Ascending aorta (tissue), 2 donors: ENCODE measurements at regions of chr3 and their contacts with region 1.

Region 1: DNA sequence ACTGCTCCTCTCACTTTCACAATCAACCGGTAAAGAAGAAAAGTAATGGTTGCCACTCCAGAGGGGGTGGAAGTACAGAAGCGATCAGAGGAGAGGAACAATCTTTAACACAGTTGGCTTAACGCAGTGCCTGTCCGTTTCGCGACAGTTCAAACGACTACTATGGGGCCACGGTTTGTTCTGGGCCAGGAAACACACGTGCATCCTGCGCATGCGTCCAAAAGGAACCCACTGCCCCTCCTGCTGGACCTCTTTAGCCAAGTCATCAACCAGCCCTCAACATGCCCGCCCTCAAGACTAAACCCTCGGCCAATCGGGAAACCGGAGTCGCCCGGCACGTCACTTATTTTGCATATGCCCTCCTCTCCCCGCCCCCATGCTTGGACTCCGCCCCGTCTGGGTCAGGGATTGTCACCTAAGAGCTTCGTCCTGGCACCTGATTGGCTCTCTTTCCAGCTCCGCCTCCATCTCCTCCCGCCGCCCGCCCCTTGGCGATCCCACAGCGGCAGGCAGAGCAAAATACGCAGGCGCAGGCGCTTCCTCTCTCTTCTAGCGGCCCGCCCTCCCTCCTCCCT is 345 bp upstream of the CDV3 start:
- DNase-seq: peak; percentile 100
- H3K4me3 ChIP-seq: peak overlapping the region; percentile 73 to 88
- H3K27ac ChIP-seq: peak overlapping the region; percentile 94 to 97
- H3K4me1 ChIP-seq: peaks cover 26 to 51% of the 10 kb centered on the region in 2 donors
- H3K27me3 ChIP-seq: no peaks in the 10 kb centered on the region
- CTCF ChIP-seq: no peak

Region 2: GRCh38 chr3:132416807-132417694 is 1156.1 kb before region 1 on chr3 and contains the start of gene DNAJC13:
- intact Hi-C with region 1: loop called (anchors 10 kb)
- DNase-seq: peak; percentile 73 to 96
- H3K4me3 ChIP-seq: peak within 1 kb of the TSS; percentile 79 to 98
- H3K27ac ChIP-seq: peak within 1 kb of the TSS; percentile 77 to 87
- H3K4me1 ChIP-seq: peaks cover 0 to 15% of the 10 kb centered on the region in 2 donors
- H3K27me3 ChIP-seq: no peaks in the 10 kb centered on the region
- CTCF ChIP-seq: no peak
- total RNA-seq, gene DNAJC13: 29.4 TPM

Region 3: GRCh38 chr3:132722164-132723024 is 850.7 kb before region 1 on chr3 and contains the start of gene NPHP3:
- intact Hi-C with region 1: loop called (anchors 1 kb)
- DNase-seq: peak; percentile 88 to 98
- H3K4me3 ChIP-seq: peak within 1 kb of the TSS; percentile 85 to 96
- H3K27ac ChIP-seq: peak within 1 kb of the TSS; percentile 93 to 97
- H3K4me1 ChIP-seq: peaks cover 6 to 17% of the 10 kb centered on the region in 2 donors
- H3K27me3 ChIP-seq: no peaks in the 10 kb centered on the region
- CTCF ChIP-seq: no peak
- total RNA-seq, gene NPHP3: 11.9 TPM

Region 4: DNA sequence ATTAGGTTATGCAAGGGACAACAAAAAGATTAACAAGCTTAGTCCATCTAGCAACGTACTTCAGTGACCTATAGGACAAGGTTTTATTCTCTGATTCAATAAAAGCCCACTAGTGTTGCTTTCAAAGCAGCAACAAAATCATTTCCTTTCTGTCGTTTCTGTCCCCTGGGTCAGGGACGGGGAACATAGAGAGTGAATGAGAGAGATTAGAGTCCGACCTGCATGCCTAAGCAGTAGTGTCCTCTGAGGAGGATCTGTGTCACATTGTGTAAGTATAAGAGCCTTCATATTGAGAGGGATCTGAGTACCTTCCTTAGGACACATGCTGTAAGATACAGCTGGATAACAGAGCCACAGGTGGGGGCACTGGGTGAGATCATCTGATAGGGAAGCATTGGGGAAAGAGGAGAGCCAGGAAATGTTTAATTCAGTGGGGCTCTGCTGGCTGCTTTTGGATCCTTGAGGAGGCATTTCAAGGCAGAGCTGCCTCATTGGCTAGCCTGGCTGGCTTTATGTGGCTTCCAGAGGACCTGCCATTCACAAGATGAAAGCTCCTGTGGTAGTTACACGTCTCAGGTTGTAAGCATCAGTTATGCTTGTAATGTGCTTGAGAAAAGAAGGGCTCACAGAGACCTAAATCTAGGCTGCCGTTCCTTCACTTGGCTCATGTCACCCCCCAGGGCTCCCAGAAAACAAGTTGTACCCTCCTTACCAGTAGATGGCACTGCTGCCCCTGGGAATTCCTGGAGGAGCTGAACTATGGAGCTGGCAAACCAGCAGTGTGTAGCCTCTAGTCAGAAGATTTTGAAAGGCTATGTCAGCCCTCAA is 532.2 kb before region 1 on chr3:
- intact Hi-C with region 1: loop called (anchors 5 kb)
- DNase-seq: peak in 1 of 2 donors; percentile 76
- H3K4me3 ChIP-seq: no peak overlapping the region
- H3K27ac ChIP-seq: peak overlapping the region in 1 of 2 donors; percentile 8
- H3K4me1 ChIP-seq: peaks cover 0 to 2% of the 10 kb centered on the region in 2 donors
- H3K27me3 ChIP-seq: no peaks in the 10 kb centered on the region
- CTCF ChIP-seq: peak; percentile 41 to 73 (median 46)

Region 5: DNA sequence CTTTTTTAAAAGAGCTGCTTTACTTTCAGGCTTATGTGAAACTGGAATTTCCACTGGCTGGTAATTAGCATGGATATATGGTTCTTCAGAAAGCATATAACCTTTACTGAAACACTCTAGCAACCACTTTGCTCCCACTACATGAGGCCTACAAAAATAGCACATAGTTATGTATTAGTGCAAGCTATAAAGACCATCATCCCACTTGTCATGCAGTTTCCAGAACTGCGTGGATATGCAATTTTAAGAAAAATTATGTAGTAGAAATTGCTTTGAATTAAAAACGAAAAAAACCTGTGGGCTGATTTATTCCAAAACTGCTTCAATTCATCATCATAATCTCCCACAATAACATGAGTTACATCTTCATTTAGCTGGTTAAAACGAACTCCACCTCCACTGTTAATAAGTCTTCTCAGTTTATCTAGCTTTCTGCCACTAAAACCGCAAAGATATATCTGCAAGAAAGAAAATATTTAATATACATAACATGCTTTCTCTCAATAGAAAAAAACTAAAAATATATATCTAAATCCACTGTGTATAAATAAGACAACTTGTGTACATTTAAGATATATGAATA is 76.4 kb after region 1 on chr3:
- intact Hi-C with region 1: no loop called
- DNase-seq: no peak
- H3K4me3 ChIP-seq: no peak overlapping the region
- H3K27ac ChIP-seq: no peak overlapping the region
- H3K4me1 ChIP-seq: no peaks in the 10 kb centered on the region
- H3K27me3 ChIP-seq: no peaks in the 10 kb centered on the region
- CTCF ChIP-seq: no peak

Region 6: DNA sequence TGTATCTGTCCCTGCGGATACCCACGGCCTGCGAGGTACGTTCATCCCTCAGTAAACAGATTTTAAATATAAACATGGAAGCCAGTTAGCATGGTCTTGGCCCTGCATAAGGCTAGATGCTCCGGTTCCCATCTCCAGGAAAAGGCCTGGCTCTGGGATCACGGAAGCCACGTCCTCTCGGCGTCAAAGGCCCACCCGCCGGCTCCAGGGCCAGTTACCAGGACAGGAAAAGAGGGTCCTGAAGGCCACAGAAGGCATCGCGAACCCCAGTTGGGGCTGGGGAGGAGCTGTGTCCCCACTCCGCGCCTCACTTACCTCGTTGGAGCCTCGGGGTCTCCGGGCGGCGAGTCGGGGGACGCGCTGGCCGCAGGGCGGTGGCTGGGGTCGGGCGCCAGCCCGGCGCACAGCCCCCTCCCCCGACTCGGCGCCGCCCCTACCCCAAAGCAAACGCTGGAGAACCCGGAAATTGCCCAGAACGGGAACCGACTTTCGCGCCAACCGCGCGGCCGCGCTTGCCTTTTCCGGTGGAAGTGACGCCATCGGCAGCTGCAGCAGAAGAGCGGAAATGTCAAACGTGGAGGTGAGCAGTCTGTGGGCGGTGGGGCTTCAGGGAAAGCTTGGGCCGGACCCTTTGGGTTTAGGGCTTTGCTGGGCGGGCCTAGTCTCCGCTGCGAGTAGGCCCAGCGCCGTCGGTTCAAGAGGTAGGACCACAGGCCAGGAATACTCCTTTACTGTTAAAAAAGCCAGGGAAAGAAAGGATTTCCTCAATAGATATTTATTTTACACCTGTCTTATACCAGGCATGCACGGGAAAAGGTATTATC is 88.5 kb after region 1 on chr3 and contains the start of gene TOPBP1:
- intact Hi-C with region 1: loop called (anchors 5 kb)
- DNase-seq: peak in 1 of 2 donors; percentile 85
- H3K4me3 ChIP-seq: peak within 1 kb of the TSS; percentile 77 to 94
- H3K27ac ChIP-seq: peak within 1 kb of the TSS; percentile 85 to 92
- H3K4me1 ChIP-seq: peaks cover 0 to 8% of the 10 kb centered on the region in 2 donors
- H3K27me3 ChIP-seq: no peaks in the 10 kb centered on the region
- CTCF ChIP-seq: no peak
- total RNA-seq, gene TOPBP1: 10.6 TPM

Region 7: DNA sequence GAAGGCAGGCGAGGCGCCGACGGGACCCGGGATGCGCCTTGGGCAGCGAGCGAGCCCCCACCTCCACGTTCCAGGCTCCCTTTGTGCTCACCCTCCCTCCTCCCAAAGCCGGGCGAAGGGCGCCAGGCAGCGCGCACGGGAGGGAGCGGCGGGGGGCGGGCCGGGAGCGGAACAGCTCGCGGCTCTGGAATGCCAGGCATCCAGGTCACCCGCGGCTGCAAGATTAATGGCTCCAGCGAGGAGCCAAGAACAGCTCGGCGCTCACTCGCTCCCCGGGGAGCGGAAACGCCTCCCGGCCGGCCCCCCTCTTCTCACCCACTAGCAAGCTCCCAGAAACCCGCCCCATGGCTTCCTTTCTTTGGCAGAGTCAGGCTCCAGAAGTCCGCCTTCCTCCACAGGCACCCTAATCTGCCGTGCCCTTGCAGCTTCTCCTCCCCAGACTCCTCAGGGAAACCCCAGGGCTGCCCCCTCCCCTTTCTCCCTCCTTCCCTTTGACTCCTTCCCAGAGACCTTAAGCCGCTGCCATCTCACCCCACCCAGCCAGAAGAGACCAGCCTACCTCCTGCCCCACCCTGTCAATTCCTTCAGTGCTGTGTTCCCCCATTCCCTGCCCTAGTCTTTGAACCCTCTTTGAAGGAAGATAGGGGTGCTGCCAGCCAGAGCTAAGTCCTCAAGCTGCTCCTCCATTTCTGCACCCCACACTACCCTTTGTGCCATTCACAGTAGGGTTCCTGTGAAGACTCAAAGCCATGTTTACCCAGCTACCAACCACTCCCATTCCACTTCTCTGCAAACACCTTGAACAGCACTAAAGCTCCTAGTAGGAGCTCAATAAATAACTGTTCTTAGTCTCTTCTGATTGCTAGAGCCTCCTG is 791.2 kb after region 1 on chr3:
- intact Hi-C with region 1: loop called (anchors 10 kb)
- DNase-seq: peak; percentile 75 to 98
- H3K4me3 ChIP-seq: peak overlapping the region; percentile 24 to 44
- H3K27ac ChIP-seq: peak overlapping the region; percentile 92 to 93
- H3K4me1 ChIP-seq: peaks cover 28 to 97% of the 10 kb centered on the region in 2 donors
- H3K27me3 ChIP-seq: no peaks in the 10 kb centered on the region
- CTCF ChIP-seq: no peak